CD8-positive, alpha-beta T cell (primary cell): ENCODE measurements at regions of chr6 and their contacts with region 1.

Region 1: GRCh38 chr6:85678602-85679444 is 36.1 kb upstream of the SYNCRIP start:
- DNase-seq: peak; percentile 95 to 100 (median 98)
- ATAC-seq: peak; percentile 87
- H3K4me3 ChIP-seq: peak overlapping the region; percentile 83 to 98
- H3K4me3 Mint-ChIP-seq: peak overlapping the region; percentile 99
- H3K27ac ChIP-seq: peak overlapping the region; percentile 88 to 96
- H3K27ac Mint-ChIP-seq: peak overlapping the region; percentile 96
- H3K4me1 ChIP-seq: peaks cover 32% of the 10 kb centered on the region
- H3K4me1 Mint-ChIP-seq: peaks cover 42% of the 10 kb centered on the region
- H3K27me3 ChIP-seq: no peaks in the 10 kb centered on the region
- H3K27me3 Mint-ChIP-seq: no peaks in the 10 kb centered on the region
- CTCF ChIP-seq: no peak

Region 2: GRCh38 chr6:83859410-83860358 is 1819.1 kb before region 1 on chr6 and contains the start of gene CYB5R4:
- CTCF ChIA-PET with region 1: no interaction called
- POLR2A ChIA-PET with region 1: interaction called, 3 read pairs
- intact Hi-C with region 1: loop called in 1 of 2 experiments (anchors 10 kb)
- DNase-seq: peak; percentile 87 to 97 (median 93)
- ATAC-seq: peak; percentile 96
- H3K4me3 ChIP-seq: peak within 1 kb of the TSS; percentile 69 to 78
- H3K4me3 Mint-ChIP-seq: peak within 1 kb of the TSS; percentile 95
- H3K27ac ChIP-seq: peak within 1 kb of the TSS; percentile 83 to 86
- H3K27ac Mint-ChIP-seq: peak within 1 kb of the TSS; percentile 91
- H3K4me1 ChIP-seq: peaks cover 18% of the 10 kb centered on the region
- H3K4me1 Mint-ChIP-seq: peaks cover 41% of the 10 kb centered on the region
- H3K27me3 ChIP-seq: no peaks in the 10 kb centered on the region
- H3K27me3 Mint-ChIP-seq: peaks cover 12% of the 10 kb centered on the region
- CTCF ChIP-seq: peak; percentile 52
- total RNA-seq, gene CYB5R4: 15.9 to 17.7 TPM

Region 3: GRCh38 chr6:84798257-84798656 is 880.6 kb before region 1 on chr6:
- CTCF ChIA-PET with region 1: no interaction called
- POLR2A ChIA-PET with region 1: no interaction called
- intact Hi-C with region 1: no loop called
- DNase-seq: no peak
- ATAC-seq: no peak
- H3K4me3 ChIP-seq: no peak overlapping the region
- H3K4me3 Mint-ChIP-seq: no peak overlapping the region
- H3K27ac ChIP-seq: no peak overlapping the region
- H3K27ac Mint-ChIP-seq: no peak overlapping the region
- H3K4me1 ChIP-seq: no peaks in the 10 kb centered on the region
- H3K4me1 Mint-ChIP-seq: no peaks in the 10 kb centered on the region
- H3K27me3 ChIP-seq: no peaks in the 10 kb centered on the region
- H3K27me3 Mint-ChIP-seq: no peaks in the 10 kb centered on the region
- CTCF ChIP-seq: no peak

Region 4: DNA sequence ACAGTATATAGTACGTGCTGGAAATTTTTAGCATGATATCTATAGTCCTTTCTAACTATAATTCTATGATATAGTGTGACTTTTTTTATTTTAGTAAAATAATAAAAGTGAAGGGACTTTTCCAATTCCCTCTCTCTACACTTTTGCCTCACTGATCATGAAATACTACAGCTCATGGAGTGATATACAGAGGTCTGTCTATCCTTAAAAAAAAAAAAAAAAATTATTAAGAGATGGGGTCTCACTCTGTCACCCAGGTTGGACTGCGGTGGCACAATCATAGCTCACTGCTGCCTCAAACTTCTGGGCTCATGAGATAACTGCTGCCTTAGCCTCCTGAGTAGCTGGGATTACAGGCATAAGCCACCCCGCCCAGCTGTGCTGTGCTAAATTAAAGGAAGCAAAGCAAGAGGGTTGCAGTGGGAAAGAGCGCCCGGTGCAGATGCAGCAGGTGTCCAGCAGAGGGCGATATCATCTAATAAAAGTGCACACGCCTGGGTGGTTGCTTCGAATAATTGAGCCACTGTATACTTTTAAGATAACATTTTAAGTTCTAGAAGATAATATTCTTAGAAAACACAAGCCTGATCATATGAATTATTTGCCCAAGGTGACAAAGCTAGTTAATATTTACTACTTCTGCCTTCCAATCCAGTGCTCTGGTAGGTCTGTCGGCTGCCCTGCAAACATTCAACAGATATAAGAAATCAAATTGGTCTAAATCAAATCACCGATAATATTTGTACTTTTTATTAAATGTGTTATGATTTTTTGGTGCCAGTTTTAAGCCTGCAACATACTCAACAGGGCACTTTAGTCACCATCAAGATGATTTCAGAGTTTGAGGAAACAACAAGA is 323.8 kb before region 1 on chr6:
- CTCF ChIA-PET with region 1: interaction called, 6 read pairs
- POLR2A ChIA-PET with region 1: interaction called, 5 read pairs
- intact Hi-C with region 1: loop called in 1 of 2 experiments (anchors 10 kb)
- DNase-seq: peak; percentile 14 to 81 (median 64)
- ATAC-seq: peak; percentile 87
- H3K4me3 ChIP-seq: no peak overlapping the region
- H3K4me3 Mint-ChIP-seq: no peak overlapping the region
- H3K27ac ChIP-seq: no peak overlapping the region
- H3K27ac Mint-ChIP-seq: no peak overlapping the region
- H3K4me1 ChIP-seq: no peaks in the 10 kb centered on the region
- H3K4me1 Mint-ChIP-seq: peaks cover 3% of the 10 kb centered on the region
- H3K27me3 ChIP-seq: peaks cover 0 to 2% of the 10 kb centered on the region in 2 experiments
- H3K27me3 Mint-ChIP-seq: no peaks in the 10 kb centered on the region
- CTCF ChIP-seq: peak; percentile 97

Region 5: GRCh38 chr6:85537055-85537494 is 141.7 kb before region 1 on chr6:
- CTCF ChIA-PET with region 1: interaction called, 6 read pairs
- POLR2A ChIA-PET with region 1: interaction called, 5 read pairs
- intact Hi-C with region 1: loop called in 1 of 2 experiments (anchors 1 kb)
- DNase-seq: peak in 2 of 9 experiments; percentile 2 to 21
- ATAC-seq: no peak
- H3K4me3 ChIP-seq: no peak overlapping the region
- H3K4me3 Mint-ChIP-seq: no peak overlapping the region
- H3K27ac ChIP-seq: no peak overlapping the region
- H3K27ac Mint-ChIP-seq: no peak overlapping the region
- H3K4me1 ChIP-seq: no peaks in the 10 kb centered on the region
- H3K4me1 Mint-ChIP-seq: peaks cover 2% of the 10 kb centered on the region
- H3K27me3 ChIP-seq: no peaks in the 10 kb centered on the region
- H3K27me3 Mint-ChIP-seq: no peaks in the 10 kb centered on the region
- CTCF ChIP-seq: peak; percentile 92

Region 6: GRCh38 chr6:85610182-85610895 is 68.5 kb before region 1 on chr6:
- CTCF ChIA-PET with region 1: no interaction called
- POLR2A ChIA-PET with region 1: interaction called, 10 read pairs
- intact Hi-C with region 1: no loop called
- DNase-seq: no peak
- ATAC-seq: no peak
- H3K4me3 ChIP-seq: no peak overlapping the region
- H3K4me3 Mint-ChIP-seq: no peak overlapping the region
- H3K27ac ChIP-seq: no peak overlapping the region
- H3K27ac Mint-ChIP-seq: no peak overlapping the region
- H3K4me1 ChIP-seq: peaks cover 4% of the 10 kb centered on the region
- H3K4me1 Mint-ChIP-seq: peaks cover 4% of the 10 kb centered on the region
- H3K27me3 ChIP-seq: no peaks in the 10 kb centered on the region
- H3K27me3 Mint-ChIP-seq: no peaks in the 10 kb centered on the region
- CTCF ChIP-seq: no peak

Region 7: DNA sequence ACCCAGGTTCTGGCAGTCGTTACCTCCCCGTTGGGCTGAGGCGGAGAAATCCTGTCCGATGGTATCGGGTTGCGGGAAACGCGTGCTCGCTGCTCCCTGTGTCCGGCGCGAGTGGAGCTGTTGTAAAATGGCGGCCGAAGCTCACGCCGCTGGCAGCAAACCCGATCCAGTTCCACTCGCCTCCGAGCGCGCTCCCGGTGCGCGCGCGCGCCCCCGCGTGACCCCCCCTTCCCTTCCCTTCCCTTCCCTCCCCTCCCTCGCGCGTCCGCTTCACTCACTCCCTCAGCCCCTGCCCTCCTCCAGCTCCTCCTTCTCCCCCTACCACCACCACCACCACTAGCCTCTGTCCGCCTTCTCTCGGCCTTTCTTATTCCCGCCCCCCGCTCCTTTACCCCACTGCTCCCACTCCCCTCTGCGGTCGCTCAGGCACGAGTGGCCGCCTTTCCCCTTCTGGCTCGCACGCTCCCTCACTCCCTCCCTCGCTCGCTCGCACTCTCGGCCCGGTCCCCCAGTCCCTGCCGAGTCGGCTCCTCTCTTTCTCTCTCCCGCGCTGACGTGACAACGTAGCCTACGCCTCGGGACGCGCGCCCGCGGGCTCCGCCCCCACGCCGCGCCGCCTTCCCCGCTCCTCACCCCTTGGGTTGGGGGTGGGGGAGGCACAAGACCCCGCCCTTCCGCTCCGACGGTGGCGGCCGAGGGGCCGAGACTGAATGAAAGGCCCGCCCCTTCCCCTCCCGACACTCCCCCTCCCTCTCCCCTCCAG is 35.9 kb before region 1 on chr6 and contains the start of gene SYNCRIP:
- CTCF ChIA-PET with region 1: interaction called, 28 read pairs
- POLR2A ChIA-PET with region 1: interaction called, 475 read pairs
- intact Hi-C with region 1: loop called (anchors 1 kb)
- DNase-seq: peak; percentile 95 to 99 (median 98)
- ATAC-seq: peak; percentile 81
- H3K4me3 ChIP-seq: peak within 1 kb of the TSS; percentile 98 to 100
- H3K4me3 Mint-ChIP-seq: peak within 1 kb of the TSS; percentile 91
- H3K27ac ChIP-seq: peak within 1 kb of the TSS; percentile 98
- H3K27ac Mint-ChIP-seq: peak within 1 kb of the TSS; percentile 96
- H3K4me1 ChIP-seq: peaks cover 38% of the 10 kb centered on the region
- H3K4me1 Mint-ChIP-seq: peaks cover 46% of the 10 kb centered on the region
- H3K27me3 ChIP-seq: no peaks in the 10 kb centered on the region
- H3K27me3 Mint-ChIP-seq: no peaks in the 10 kb centered on the region
- CTCF ChIP-seq: no peak
- total RNA-seq, gene SYNCRIP: 64.0 to 64.3 TPM

Region 8: GRCh38 chr6:87322304-87323212 is 1643.7 kb after region 1 on chr6 and contains the start of gene SMIM8:
- CTCF ChIA-PET with region 1: no interaction called
- POLR2A ChIA-PET with region 1: no interaction called
- intact Hi-C with region 1: loop called in 1 of 2 experiments (anchors 5 kb)
- DNase-seq: peak; percentile 66 to 90 (median 86)
- ATAC-seq: peak; percentile 99
- H3K4me3 ChIP-seq: peak within 1 kb of the TSS; percentile 72 to 86
- H3K4me3 Mint-ChIP-seq: peak within 1 kb of the TSS; percentile 94
- H3K27ac ChIP-seq: peak within 1 kb of the TSS; percentile 52 to 58
- H3K27ac Mint-ChIP-seq: peak within 1 kb of the TSS; percentile 90
- H3K4me1 ChIP-seq: peaks cover 6% of the 10 kb centered on the region
- H3K4me1 Mint-ChIP-seq: peaks cover 25% of the 10 kb centered on the region
- H3K27me3 ChIP-seq: no peaks in the 10 kb centered on the region
- H3K27me3 Mint-ChIP-seq: no peaks in the 10 kb centered on the region
- CTCF ChIP-seq: peak; percentile 99
- total RNA-seq, gene SMIM8: 4.2 TPM